Astrocyte of the cerebellum (primary cell): ENCODE measurements at regions of chr2 and their contacts with region 1.

Region 1: GRCh38 chr2:1153920-1154319 is 203.3 kb downstream of the SNTG2 start:
- DNase-seq: no peak
- H3K4me3 ChIP-seq: no peak overlapping the region
- CTCF ChIP-seq: no peak

Region 2: GRCh38 chr2:1047485-1047884 is 106.4 kb before region 1 on chr2:
- in situ Hi-C with region 1: no loop called
- DNase-seq: no peak
- H3K4me3 ChIP-seq: no peak overlapping the region
- CTCF ChIP-seq: no peak

Region 3: DNA sequence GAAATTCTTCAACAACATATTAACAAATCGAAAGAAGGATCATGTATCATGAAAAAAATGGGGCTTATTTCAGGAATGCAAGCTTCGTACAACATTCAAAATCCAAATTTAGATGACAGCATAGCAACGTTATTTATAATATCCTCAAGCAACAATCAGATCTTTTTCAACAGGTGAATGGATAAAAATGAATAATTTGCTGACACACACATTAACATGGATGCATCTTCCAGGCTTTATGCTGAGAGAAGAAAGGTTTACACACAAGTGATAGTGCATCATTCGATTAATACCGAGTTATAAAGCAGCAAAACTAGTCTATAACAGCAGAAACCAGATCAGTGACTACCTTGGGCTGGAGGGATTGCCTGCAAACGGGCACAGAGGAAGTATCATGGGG is 49.9 kb after region 1 on chr2:
- in situ Hi-C with region 1: loop called (anchors 5 kb)
- DNase-seq: no peak
- H3K4me3 ChIP-seq: no peak overlapping the region
- CTCF ChIP-seq: no peak